Transverse colon (tissue), 4 donors: ENCODE measurements at regions of chr9 and their contacts with region 1.

Region 1: GRCh38 chr9:134205672-134206310 is 41.4 kb upstream of the RNU6ATAC start:
- DNase-seq: peak; percentile 55
- H3K4me3 ChIP-seq: no peak overlapping the region
- H3K27ac ChIP-seq: peak overlapping the region in 2 of 4 donors; percentile 4 to 10
- H3K4me1 ChIP-seq: peaks cover 0 to 9% (median 9%) of the 10 kb centered on the region in 4 donors
- H3K27me3 ChIP-seq: no peaks in the 10 kb centered on the region
- CTCF ChIP-seq: no peak
- EP300 ChIP-seq: no peak
- POLR2A ChIP-seq: no peak

Region 2: GRCh38 chr9:134111064-134111463 is 94.7 kb before region 1 on chr9:
- in situ Hi-C with region 1: no loop called
- intact Hi-C with region 1: no loop called
- DNase-seq: no peak
- H3K4me3 ChIP-seq: no peak overlapping the region
- H3K27ac ChIP-seq: no peak overlapping the region
- H3K4me1 ChIP-seq: no peaks in the 10 kb centered on the region
- H3K27me3 ChIP-seq: peaks cover 17% of the 10 kb centered on the region
- CTCF ChIP-seq: no peak
- EP300 ChIP-seq: no peak
- POLR2A ChIP-seq: no peak

Region 3: GRCh38 chr9:134217832-134218629 is 12.2 kb after region 1 on chr9:
- in situ Hi-C with region 1: no loop called
- intact Hi-C with region 1: loop called (anchors 1 kb)
- DNase-seq: no peak
- H3K4me3 ChIP-seq: no peak overlapping the region
- H3K27ac ChIP-seq: no peak overlapping the region
- H3K4me1 ChIP-seq: peaks cover 0 to 11% (median 5%) of the 10 kb centered on the region in 4 donors
- H3K27me3 ChIP-seq: peaks cover 11% of the 10 kb centered on the region
- CTCF ChIP-seq: no peak
- EP300 ChIP-seq: no peak
- POLR2A ChIP-seq: no peak

Region 4: GRCh38 chr9:135468866-135469521 is 1263.2 kb after region 1 on chr9:
- in situ Hi-C with region 1: no loop called
- intact Hi-C with region 1: no loop called
- DNase-seq: no peak
- H3K4me3 ChIP-seq: no peak overlapping the region
- H3K27ac ChIP-seq: no peak overlapping the region
- H3K4me1 ChIP-seq: no peaks in the 10 kb centered on the region
- H3K27me3 ChIP-seq: no peaks in the 10 kb centered on the region
- CTCF ChIP-seq: no peak
- EP300 ChIP-seq: no peak
- POLR2A ChIP-seq: no peak